CD4-positive, alpha-beta memory T cell (primary cell): ENCODE measurements at regions of chr16 and their contacts with region 1.

Region 1: DNA sequence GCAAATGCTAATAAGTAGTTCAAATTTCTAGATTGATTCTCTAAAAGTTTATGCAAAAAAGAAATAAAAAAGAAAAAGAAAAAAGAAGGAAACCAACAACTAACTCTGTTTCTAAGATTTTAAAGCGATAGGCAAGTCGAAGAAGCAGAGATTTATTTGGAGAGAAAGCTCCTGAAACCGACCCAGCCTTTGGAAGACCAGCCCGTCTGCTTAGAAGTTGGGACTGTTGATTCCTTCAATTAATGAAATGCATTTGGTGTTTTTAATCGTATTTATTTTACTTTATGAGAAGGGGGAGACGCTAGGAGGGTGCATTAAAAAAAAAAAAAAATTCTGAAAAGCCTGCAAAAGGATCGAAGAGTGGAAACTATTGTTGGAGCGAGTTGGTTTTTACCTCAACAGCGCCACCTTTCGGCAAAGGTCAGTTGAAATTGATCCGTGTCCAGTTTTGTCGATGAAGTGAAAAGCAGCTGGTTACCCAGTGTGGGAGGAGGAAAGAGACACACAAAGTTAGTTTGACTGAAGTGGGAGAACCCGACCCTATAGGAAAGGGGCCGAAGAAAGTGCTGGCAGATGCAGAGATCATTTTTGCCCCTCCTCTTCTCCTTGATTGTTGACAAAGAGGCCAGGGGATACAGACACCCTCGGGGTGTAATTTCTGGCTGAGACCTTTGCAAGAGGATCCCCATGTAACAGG is 1.5 kb upstream of the MAF start:
- DNase-seq: peak; percentile 85 to 89 (median 85)
- H3K4me3 ChIP-seq: peak overlapping the region; percentile 57 to 90
- H3K4me3 Mint-ChIP-seq: peak overlapping the region; percentile 95 to 99 (median 98)
- H3K27ac ChIP-seq: peak overlapping the region; percentile 65
- H3K27ac Mint-ChIP-seq: peak overlapping the region; percentile 73 to 99 (median 96)
- H3K4me1 ChIP-seq: peaks cover 27% of the 10 kb centered on the region
- H3K4me1 Mint-ChIP-seq: peaks cover 18 to 54% (median 32%) of the 10 kb centered on the region in 4 donors
- H3K27me3 ChIP-seq: no peaks in the 10 kb centered on the region
- H3K27me3 Mint-ChIP-seq: no peaks in the 10 kb centered on the region

Region 2: GRCh38 chr16:78122774-78123315 is 1479.2 kb before region 1 on chr16:
- CTCF ChIA-PET with region 1: no interaction called
- POLR2A ChIA-PET with region 1: no interaction called
- intact Hi-C with region 1: loop called (anchors 1 kb)
- DNase-seq: peak in 4 of 5 donors; percentile 54 to 63 (median 58)
- H3K4me3 ChIP-seq: no peak overlapping the region
- H3K4me3 Mint-ChIP-seq: peak overlapping the region in 3 of 8 donors; percentile 32 to 53 (median 49)
- H3K27ac ChIP-seq: no peak overlapping the region
- H3K27ac Mint-ChIP-seq: peak overlapping the region in 5 of 7 donors; percentile 14 to 73 (median 62)
- H3K4me1 ChIP-seq: no peaks in the 10 kb centered on the region
- H3K4me1 Mint-ChIP-seq: peaks cover 2 to 11% (median 4%) of the 10 kb centered on the region in 4 donors
- H3K27me3 ChIP-seq: no peaks in the 10 kb centered on the region
- H3K27me3 Mint-ChIP-seq: no peaks in the 10 kb centered on the region

Region 3: GRCh38 chr16:78742501-78743283 is 859.4 kb before region 1 on chr16:
- CTCF ChIA-PET with region 1: no interaction called
- POLR2A ChIA-PET with region 1: interaction called, 12 read pairs
- intact Hi-C with region 1: loop called (anchors 10 kb)
- DNase-seq: peak; percentile 73 to 91 (median 80)
- H3K4me3 ChIP-seq: peak overlapping the region; percentile 64 to 82
- H3K4me3 Mint-ChIP-seq: peak overlapping the region; percentile 81 to 90 (median 88)
- H3K27ac ChIP-seq: peak overlapping the region; percentile 81
- H3K27ac Mint-ChIP-seq: peak overlapping the region; percentile 93 to 99 (median 98)
- H3K4me1 ChIP-seq: peaks cover 33% of the 10 kb centered on the region
- H3K4me1 Mint-ChIP-seq: peaks cover 26 to 48% (median 30%) of the 10 kb centered on the region in 4 donors
- H3K27me3 ChIP-seq: no peaks in the 10 kb centered on the region
- H3K27me3 Mint-ChIP-seq: no peaks in the 10 kb centered on the region

Region 4: GRCh38 chr16:79047229-79047983 is 554.7 kb before region 1 on chr16:
- CTCF ChIA-PET with region 1: interaction called, 8 read pairs
- POLR2A ChIA-PET with region 1: no interaction called
- intact Hi-C with region 1: loop called (anchors 2 kb)
- DNase-seq: peak in 4 of 5 donors; percentile 14 to 38 (median 23)
- H3K4me3 ChIP-seq: no peak overlapping the region
- H3K4me3 Mint-ChIP-seq: no peak overlapping the region
- H3K27ac ChIP-seq: no peak overlapping the region
- H3K27ac Mint-ChIP-seq: no peak overlapping the region
- H3K4me1 ChIP-seq: peaks cover 18% of the 10 kb centered on the region
- H3K4me1 Mint-ChIP-seq: peaks cover 21 to 24% (median 22%) of the 10 kb centered on the region in 4 donors
- H3K27me3 ChIP-seq: no peaks in the 10 kb centered on the region
- H3K27me3 Mint-ChIP-seq: no peaks in the 10 kb centered on the region

Region 5: DNA sequence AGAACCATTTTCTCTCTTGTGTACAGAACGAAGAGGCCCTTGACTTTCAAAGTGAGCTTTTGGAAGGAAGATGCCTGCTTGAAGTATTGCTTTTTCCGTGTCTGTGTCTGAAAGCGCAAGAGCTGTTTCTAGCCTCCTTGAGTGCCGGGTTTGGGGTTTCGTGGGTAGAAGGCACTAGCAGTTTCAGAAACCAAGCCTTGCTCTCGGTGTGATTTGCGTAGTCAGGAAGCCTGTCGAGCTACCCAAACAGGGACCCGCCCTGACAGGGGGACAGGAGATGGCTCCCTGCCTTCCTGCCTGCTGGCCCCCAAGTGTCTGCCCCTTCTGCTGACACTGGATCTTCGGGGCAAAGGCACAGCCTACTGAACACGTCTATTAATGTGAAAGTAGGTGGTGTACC is 323.6 kb before region 1 on chr16:
- CTCF ChIA-PET with region 1: interaction called, 13 read pairs
- POLR2A ChIA-PET with region 1: interaction called, 104 read pairs
- intact Hi-C with region 1: loop called (anchors 2 kb)
- DNase-seq: peak; percentile 73 to 82 (median 80)
- H3K4me3 ChIP-seq: peak overlapping the region; percentile 6 to 23
- H3K4me3 Mint-ChIP-seq: peak overlapping the region; percentile 68 to 92 (median 82)
- H3K27ac ChIP-seq: peak overlapping the region; percentile 50
- H3K27ac Mint-ChIP-seq: peak overlapping the region; percentile 85 to 98 (median 97)
- H3K4me1 ChIP-seq: peaks cover 68% of the 10 kb centered on the region
- H3K4me1 Mint-ChIP-seq: peaks cover 50 to 87% (median 73%) of the 10 kb centered on the region in 4 donors
- H3K27me3 ChIP-seq: no peaks in the 10 kb centered on the region
- H3K27me3 Mint-ChIP-seq: no peaks in the 10 kb centered on the region

Region 6: GRCh38 chr16:79640513-79641355 is 38.7 kb after region 1 on chr16:
- CTCF ChIA-PET with region 1: interaction called, 8 read pairs
- POLR2A ChIA-PET with region 1: interaction called, 37 read pairs
- intact Hi-C with region 1: no loop called
- DNase-seq: peak in 4 of 5 donors; percentile 20 to 59 (median 37)
- H3K4me3 ChIP-seq: peak overlapping the region in 1 of 2 donors; percentile 13
- H3K4me3 Mint-ChIP-seq: peak overlapping the region; percentile 34 to 85 (median 80)
- H3K27ac ChIP-seq: peak overlapping the region; percentile 37
- H3K27ac Mint-ChIP-seq: peak overlapping the region; percentile 79 to 95 (median 91)
- H3K4me1 ChIP-seq: peaks cover 43% of the 10 kb centered on the region
- H3K4me1 Mint-ChIP-seq: peaks cover 25 to 44% (median 40%) of the 10 kb centered on the region in 4 donors
- H3K27me3 ChIP-seq: no peaks in the 10 kb centered on the region
- H3K27me3 Mint-ChIP-seq: no peaks in the 10 kb centered on the region

Region 7: DNA sequence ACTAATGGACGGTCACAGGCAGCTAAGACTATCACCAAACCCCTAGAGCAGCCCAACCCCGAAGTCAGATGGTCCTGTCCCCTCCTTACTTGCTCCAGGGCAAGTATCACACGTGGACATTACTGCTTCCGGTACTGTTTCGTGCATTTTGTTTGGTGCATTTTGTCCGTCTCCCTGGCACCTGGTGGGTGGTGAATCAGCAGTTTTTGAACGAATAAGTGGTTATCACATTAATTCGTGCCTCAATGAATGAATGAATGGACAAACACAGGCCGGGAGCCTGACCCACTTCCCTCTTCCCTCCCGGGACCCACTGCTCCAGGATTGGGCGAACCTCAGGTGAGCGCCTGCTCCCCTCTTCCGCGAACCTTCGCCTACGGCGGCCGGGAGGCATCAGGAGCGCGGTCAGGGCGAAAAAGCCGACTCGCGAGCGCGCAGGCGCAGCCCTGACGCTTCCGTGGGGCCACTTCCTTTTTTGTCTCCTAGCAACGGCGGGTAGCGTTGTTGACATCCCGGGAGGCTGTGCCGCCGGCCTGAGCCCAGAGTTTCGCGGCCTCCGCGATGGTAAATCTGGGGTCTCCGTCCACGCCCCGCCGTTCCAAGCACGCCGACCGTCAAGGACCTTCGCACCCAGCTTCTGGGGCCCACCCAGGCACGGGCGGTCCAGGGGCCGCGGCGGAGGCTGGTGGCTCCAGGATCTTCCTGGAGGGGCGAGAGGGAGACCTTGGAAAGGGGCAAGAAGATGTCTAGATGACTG is 938.6 kb after region 1 on chr16 and contains the start of gene DYNLRB2:
- CTCF ChIA-PET with region 1: no interaction called
- POLR2A ChIA-PET with region 1: no interaction called
- intact Hi-C with region 1: loop called (anchors 2 kb)
- DNase-seq: peak; percentile 89 to 96 (median 95)
- H3K4me3 ChIP-seq: peak within 1 kb of the TSS; percentile 57 to 97
- H3K4me3 Mint-ChIP-seq: peak within 1 kb of the TSS; percentile 91 to 98 (median 96)
- H3K27ac ChIP-seq: peak within 1 kb of the TSS; percentile 67
- H3K27ac Mint-ChIP-seq: peak within 1 kb of the TSS; percentile 95 to 99 (median 98)
- H3K4me1 ChIP-seq: peaks cover 12% of the 10 kb centered on the region
- H3K4me1 Mint-ChIP-seq: peaks cover 8 to 21% (median 14%) of the 10 kb centered on the region in 4 donors
- H3K27me3 ChIP-seq: no peaks in the 10 kb centered on the region
- H3K27me3 Mint-ChIP-seq: peaks cover 1 to 7% of the 10 kb centered on the region in 2 donors
- total RNA-seq, gene DYNLRB2: 0.78 TPM in 1 of 2 experiments, not detected in the other